ENCODE measurements at regions of chr14 and their contacts with region 1.

Region 1: DNA sequence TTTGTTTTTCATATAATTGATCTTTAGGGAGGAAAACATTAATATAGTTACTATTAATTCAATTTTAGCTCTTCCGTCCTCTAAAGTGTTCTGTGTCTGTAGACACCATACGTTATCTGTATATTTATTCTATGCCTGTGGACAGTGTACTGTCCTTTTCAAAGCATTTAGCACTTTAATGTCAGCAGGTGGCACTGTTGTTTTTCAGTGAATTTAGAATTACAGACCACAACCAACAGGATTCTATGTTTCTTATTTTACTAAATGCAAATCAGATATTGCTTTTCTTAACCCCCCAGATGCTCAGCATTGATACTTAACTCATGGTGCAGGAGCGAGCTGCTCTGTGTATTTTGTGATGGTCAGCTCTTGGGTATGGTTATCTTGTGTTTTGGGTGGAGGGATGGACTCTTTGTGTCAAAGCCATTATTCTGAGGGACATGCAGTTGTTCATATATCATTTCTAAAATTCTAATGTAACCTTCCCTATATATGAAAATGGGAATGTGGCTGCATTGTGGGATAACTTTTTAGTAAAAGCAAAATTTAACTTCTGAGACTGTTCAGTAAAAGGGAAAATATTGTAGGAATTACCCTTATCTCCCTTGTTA is 65.2 kb downstream of the PAPOLA start:
- DNase-seq: no peak
- H3K4me3 ChIP-seq: no peak overlapping the region
- H3K27ac ChIP-seq: no peak overlapping the region
- H3K4me1 ChIP-seq: no peaks in the 10 kb centered on the region
- H3K27me3 ChIP-seq: no peaks in the 10 kb centered on the region
- CTCF ChIP-seq: peak; percentile 29 to 36 (median 31)
- POLR2A ChIP-seq: no peak

Region 2: DNA sequence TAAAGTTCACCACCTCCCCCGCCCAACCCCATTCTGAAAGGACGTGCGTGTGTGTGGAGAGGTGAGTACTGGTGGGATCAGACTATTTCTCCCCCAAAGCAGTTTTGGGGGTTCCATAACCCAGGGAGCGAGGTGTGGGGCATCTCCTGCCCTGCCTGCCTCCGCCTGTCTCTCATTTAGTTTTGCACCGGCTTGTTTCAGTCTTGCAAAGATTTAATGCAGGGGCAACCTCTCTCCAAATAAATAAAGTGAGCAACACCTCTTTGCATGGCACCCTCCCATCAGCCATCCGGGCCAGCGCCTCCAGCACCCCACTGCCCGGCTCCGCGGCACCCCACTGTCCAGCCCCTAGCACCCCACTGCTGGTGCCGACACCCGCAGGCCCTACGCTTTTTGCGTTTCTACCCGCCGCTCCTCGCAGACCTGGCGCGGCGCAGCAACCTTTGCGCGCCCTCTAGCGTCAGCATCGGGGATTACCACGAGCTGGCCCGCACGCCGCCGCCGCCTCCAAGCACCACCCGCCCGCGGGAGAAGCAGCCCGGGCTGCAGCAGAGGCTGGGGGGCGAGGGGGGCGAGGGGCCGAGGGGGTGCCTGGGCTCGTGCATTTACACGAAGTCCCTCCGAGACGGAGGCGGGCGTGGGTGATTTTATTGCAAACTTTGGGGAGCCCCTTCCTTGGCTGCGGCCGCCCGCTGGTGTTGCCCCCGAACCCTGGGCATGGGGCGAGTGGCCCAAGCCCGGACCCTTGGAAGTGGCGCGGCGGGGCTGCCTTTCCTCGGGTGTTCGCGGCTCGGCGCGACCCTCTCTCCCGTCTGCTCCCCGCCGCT is 174.0 kb after region 1 on chr14:
- intact Hi-C with region 1: loop called (anchors 10 kb)
- DNase-seq: peak; percentile 79
- H3K4me3 ChIP-seq: peak overlapping the region; percentile 31 to 48
- H3K27ac ChIP-seq: no peak overlapping the region
- H3K4me1 ChIP-seq: peaks cover 17% of the 10 kb centered on the region
- H3K27me3 ChIP-seq: no peaks in the 10 kb centered on the region
- CTCF ChIP-seq: peak; percentile 71 to 92 (median 74)
- POLR2A ChIP-seq: no peak

Measured in testis (tissue), 5 donors.